Natural killer cell (primary cell): ENCODE measurements at regions of chr7 and their contacts with region 1.

Region 1: GRCh38 chr7:82572195-82572880 is 128.8 kb upstream of the CACNA2D1 start:
- DNase-seq: peak; percentile 35 to 71
- ATAC-seq: peak in 2 of 3 donors; percentile 50 to 79
- H3K4me3 ChIP-seq: no peak overlapping the region
- H3K4me3 Mint-ChIP-seq: no peak overlapping the region
- H3K27ac ChIP-seq: no peak overlapping the region
- H3K27ac Mint-ChIP-seq: no peak overlapping the region
- H3K4me1 ChIP-seq: peaks cover 3% of the 10 kb centered on the region
- H3K4me1 Mint-ChIP-seq: no peaks in the 10 kb centered on the region
- H3K27me3 ChIP-seq: no peaks in the 10 kb centered on the region
- H3K27me3 Mint-ChIP-seq: no peaks in the 10 kb centered on the region
- CTCF ChIP-seq: peak; percentile 67

Region 2: GRCh38 chr7:81482600-81483186 is 1089.6 kb before region 1 on chr7:
- intact Hi-C with region 1: loop called (anchors 10 kb)
- DNase-seq: peak in 1 of 2 donors; percentile 17
- ATAC-seq: no peak
- H3K4me3 ChIP-seq: no peak overlapping the region
- H3K4me3 Mint-ChIP-seq: no peak overlapping the region
- H3K27ac ChIP-seq: no peak overlapping the region
- H3K27ac Mint-ChIP-seq: no peak overlapping the region
- H3K4me1 ChIP-seq: no peaks in the 10 kb centered on the region
- H3K4me1 Mint-ChIP-seq: no peaks in the 10 kb centered on the region
- H3K27me3 ChIP-seq: no peaks in the 10 kb centered on the region
- H3K27me3 Mint-ChIP-seq: no peaks in the 10 kb centered on the region
- CTCF ChIP-seq: peak; percentile 65

Region 3: DNA sequence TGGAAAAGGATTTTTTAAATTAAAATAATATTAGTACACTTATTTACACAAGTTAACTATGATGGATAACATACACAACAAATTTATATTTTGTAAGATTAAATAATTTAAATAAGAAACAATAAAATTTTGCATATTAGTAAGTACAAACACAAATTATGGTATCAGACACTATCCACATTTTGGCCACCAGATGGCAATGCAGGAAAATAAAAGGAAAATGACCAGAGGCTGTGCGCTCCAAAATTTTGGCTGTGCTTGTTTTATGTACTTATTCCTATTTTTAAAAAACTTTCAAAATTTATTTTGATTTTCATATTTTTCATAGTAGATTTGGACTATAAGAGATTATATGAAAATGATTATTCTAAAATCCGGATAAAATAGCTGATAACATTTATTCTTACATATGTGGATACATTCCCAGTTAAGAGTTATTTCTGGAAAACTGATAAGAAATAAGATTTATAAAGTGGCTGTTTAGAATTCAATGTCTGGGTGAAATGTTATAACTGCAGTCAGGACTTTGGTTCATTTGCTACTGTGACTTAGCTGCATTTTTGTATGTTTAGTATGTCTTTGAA is 527.7 kb before region 1 on chr7:
- intact Hi-C with region 1: loop called (anchors 10 kb)
- DNase-seq: peak in 1 of 2 donors; percentile 32
- ATAC-seq: no peak
- H3K4me3 ChIP-seq: no peak overlapping the region
- H3K4me3 Mint-ChIP-seq: no peak overlapping the region
- H3K27ac ChIP-seq: no peak overlapping the region
- H3K27ac Mint-ChIP-seq: no peak overlapping the region
- H3K4me1 ChIP-seq: no peaks in the 10 kb centered on the region
- H3K4me1 Mint-ChIP-seq: no peaks in the 10 kb centered on the region
- H3K27me3 ChIP-seq: no peaks in the 10 kb centered on the region
- H3K27me3 Mint-ChIP-seq: no peaks in the 10 kb centered on the region
- CTCF ChIP-seq: no peak

Region 4: DNA sequence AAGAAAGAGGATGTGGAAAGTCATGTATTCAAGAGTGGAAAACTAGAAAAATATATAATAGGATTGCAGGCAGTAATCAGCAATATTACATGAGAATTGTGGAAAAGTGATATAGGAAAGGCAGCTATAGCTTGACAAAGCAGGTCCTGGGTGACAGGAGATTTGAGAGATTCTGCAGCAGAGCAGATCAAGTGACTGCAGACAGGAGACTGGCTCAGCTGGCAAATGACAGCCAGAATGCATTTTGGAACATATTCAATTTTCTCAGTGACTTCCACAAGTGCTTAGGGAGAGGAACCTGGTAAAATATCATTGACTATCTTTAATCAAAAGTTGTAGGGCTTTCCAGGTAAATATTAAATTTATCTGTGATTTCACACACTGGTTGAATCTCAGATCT is 131.8 kb after region 1 on chr7:
- intact Hi-C with region 1: no loop called
- DNase-seq: no peak
- ATAC-seq: no peak
- H3K4me3 ChIP-seq: no peak overlapping the region
- H3K4me3 Mint-ChIP-seq: no peak overlapping the region
- H3K27ac ChIP-seq: no peak overlapping the region
- H3K27ac Mint-ChIP-seq: no peak overlapping the region
- H3K4me1 ChIP-seq: no peaks in the 10 kb centered on the region
- H3K4me1 Mint-ChIP-seq: no peaks in the 10 kb centered on the region
- H3K27me3 ChIP-seq: no peaks in the 10 kb centered on the region
- H3K27me3 Mint-ChIP-seq: peaks cover 0 to 7% of the 10 kb centered on the region in 2 donors
- CTCF ChIP-seq: no peak